ENCODE measurements at regions of chr7 and their contacts with region 1.

Region 1: GRCh38 chr7:140403878-140404564 is at the start of gene RAB19:
- DNase-seq: peak; percentile 67
- H3K4me3 Mint-ChIP-seq: peak within 1 kb of the TSS; percentile 82
- H3K27ac Mint-ChIP-seq: peak within 1 kb of the TSS; percentile 86
- H3K4me1 Mint-ChIP-seq: peaks cover 27% of the 10 kb centered on the region
- H3K27me3 Mint-ChIP-seq: no peaks in the 10 kb centered on the region
- total RNA-seq, gene RAB19: 4.6 to 5.2 TPM

Region 2: GRCh38 chr7:140062528-140063299 is 341.3 kb before region 1 on chr7 and contains the start of gene PARP12:
- CTCF ChIA-PET with region 1: no interaction called
- intact Hi-C with region 1: loop called (anchors 5 kb)
- DNase-seq: peak; percentile 76
- H3K4me3 Mint-ChIP-seq: peak within 1 kb of the TSS; percentile 81
- H3K27ac Mint-ChIP-seq: no peak within 1 kb of the TSS
- H3K4me1 Mint-ChIP-seq: peaks cover 35% of the 10 kb centered on the region
- H3K27me3 Mint-ChIP-seq: no peaks in the 10 kb centered on the region
- total RNA-seq, gene PARP12: 25.2 to 25.3 TPM

Region 3: GRCh38 chr7:140358412-140359051 is 45.5 kb before region 1 on chr7:
- CTCF ChIA-PET with region 1: interaction called, 3 read pairs
- intact Hi-C with region 1: loop called (anchors 2 kb)
- DNase-seq: no peak
- H3K4me3 Mint-ChIP-seq: peak overlapping the region; percentile 38
- H3K27ac Mint-ChIP-seq: peak overlapping the region; percentile 4
- H3K4me1 Mint-ChIP-seq: peaks cover 26% of the 10 kb centered on the region
- H3K27me3 Mint-ChIP-seq: no peaks in the 10 kb centered on the region

Region 4: DNA sequence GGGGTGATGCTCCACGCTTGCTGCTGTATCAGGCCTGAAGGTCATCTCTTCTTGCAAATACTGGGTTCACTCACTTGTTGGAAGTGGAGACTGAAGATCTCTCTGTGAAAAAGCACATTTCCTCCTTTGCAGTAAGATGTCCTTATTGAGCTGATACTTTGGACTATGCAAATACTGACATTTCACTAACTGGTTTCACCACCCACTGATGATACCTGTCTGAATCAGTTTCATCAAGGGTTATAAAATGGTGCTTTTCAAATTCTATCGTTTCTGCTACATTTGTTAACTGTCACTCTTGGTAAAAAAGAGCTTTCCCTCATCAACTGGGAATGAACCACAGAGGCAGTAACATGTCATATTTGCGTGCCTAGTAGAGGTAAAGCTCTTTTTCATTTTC is 35.3 kb after region 1 on chr7:
- CTCF ChIA-PET with region 1: interaction called, 10 read pairs
- intact Hi-C with region 1: loop called (anchors 5 kb)
- DNase-seq: no peak
- H3K4me3 Mint-ChIP-seq: no peak overlapping the region
- H3K27ac Mint-ChIP-seq: no peak overlapping the region
- H3K4me1 Mint-ChIP-seq: peaks cover 7% of the 10 kb centered on the region
- H3K27me3 Mint-ChIP-seq: no peaks in the 10 kb centered on the region

Region 5: GRCh38 chr7:140841166-140841715 is 437.2 kb after region 1 on chr7:
- CTCF ChIA-PET with region 1: no interaction called
- intact Hi-C with region 1: no loop called
- DNase-seq: no peak
- H3K4me3 Mint-ChIP-seq: no peak overlapping the region
- H3K27ac Mint-ChIP-seq: no peak overlapping the region
- H3K4me1 Mint-ChIP-seq: peaks cover 2% of the 10 kb centered on the region
- H3K27me3 Mint-ChIP-seq: no peaks in the 10 kb centered on the region